CD8-positive, alpha-beta T cell (primary cell): ENCODE measurements at regions of chr17 and their contacts with region 1.

Region 1: DNA sequence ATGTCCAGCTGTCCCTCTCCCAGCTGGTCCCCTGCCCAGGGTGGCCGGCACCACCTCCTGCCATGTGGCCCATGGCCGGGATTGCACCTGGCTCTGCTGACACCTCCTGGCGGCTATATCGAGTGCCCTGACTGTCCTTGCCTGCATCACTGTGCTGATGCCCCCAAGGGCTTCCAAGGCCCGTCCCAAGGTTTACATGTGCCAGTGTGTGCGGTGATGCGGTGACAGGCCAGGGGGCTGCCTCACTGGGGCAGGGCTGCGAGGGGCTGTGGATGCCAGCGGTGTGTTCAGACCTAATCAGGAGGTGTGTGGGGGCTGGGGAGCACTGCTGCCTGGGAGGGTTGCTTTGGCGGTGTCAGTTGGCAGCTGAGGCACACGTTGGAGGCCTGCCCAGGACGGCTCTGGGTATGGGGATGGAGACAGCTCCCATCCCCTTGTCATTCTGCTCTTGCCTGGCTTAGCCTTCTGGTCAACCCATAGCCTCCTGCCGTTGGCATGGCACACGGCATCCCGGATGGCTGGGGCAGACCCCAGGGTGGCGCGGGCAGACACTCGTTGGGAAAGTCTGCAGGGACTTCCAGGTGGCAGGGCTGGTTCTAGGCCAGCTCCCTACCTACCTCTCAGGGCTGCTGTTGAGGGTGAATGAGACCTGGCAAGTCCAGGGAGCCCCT is 5.5 kb downstream of the MAP2K3 start:
- DNase-seq: peak in 1 of 9 experiments; percentile 16
- ATAC-seq: no peak
- H3K4me3 ChIP-seq: no peak overlapping the region
- H3K4me3 Mint-ChIP-seq: no peak overlapping the region
- H3K27ac ChIP-seq: peak overlapping the region in 1 of 2 experiments; percentile 4
- H3K27ac Mint-ChIP-seq: peak overlapping the region; percentile 71
- H3K4me1 ChIP-seq: peaks cover 40% of the 10 kb centered on the region
- H3K4me1 Mint-ChIP-seq: peaks cover 58% of the 10 kb centered on the region
- H3K27me3 ChIP-seq: no peaks in the 10 kb centered on the region
- H3K27me3 Mint-ChIP-seq: no peaks in the 10 kb centered on the region
- CTCF ChIP-seq: no peak

Region 2: GRCh38 chr17:21304091-21304490 is 14.1 kb after region 1 on chr17:
- CTCF ChIA-PET with region 1: no interaction called
- POLR2A ChIA-PET with region 1: no interaction called
- intact Hi-C with region 1: loop called in 1 of 2 experiments (anchors 2 kb)
- DNase-seq: no peak
- ATAC-seq: no peak
- H3K4me3 ChIP-seq: no peak overlapping the region
- H3K4me3 Mint-ChIP-seq: no peak overlapping the region
- H3K27ac ChIP-seq: no peak overlapping the region
- H3K27ac Mint-ChIP-seq: no peak overlapping the region
- H3K4me1 ChIP-seq: no peaks in the 10 kb centered on the region
- H3K4me1 Mint-ChIP-seq: no peaks in the 10 kb centered on the region
- H3K27me3 ChIP-seq: no peaks in the 10 kb centered on the region
- H3K27me3 Mint-ChIP-seq: no peaks in the 10 kb centered on the region
- CTCF ChIP-seq: no peak

Region 3: DNA sequence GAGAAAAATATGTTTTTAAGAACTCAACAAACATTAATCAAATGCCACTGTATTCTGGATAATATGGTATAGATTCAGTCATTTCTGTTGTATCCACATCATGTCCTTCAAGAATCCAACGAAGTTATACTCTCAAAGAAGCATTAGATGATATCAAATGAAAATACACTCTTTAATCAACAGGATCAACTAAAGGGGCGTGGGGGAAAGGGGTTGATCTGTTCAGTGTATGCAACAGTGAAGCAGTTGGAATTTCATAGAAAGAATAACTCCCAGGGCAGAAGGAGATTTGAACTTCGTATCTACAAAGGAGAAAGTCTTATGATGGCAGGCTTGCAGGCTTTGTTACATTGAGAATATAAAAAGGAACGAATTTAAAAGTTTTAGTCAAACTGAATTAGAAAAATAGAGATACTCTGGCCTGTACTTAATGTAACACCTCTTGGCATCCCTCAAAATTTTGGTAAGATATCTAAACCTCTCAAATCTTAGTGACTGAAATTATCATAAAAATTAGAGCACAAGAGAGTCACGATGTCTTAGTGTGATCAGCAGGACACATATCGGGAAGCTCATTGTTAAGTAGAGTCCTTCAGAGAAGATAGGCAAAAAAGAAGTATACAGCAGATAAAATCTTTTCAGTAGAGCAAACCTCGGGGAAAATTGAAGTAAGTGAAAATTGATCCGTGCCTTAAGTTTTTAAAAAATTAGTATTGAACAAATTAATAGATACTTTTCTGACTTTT is 833.7 kb after region 1 on chr17:
- CTCF ChIA-PET with region 1: no interaction called
- POLR2A ChIA-PET with region 1: no interaction called
- intact Hi-C with region 1: no loop called
- DNase-seq: no peak
- ATAC-seq: no peak
- H3K4me3 ChIP-seq: no peak overlapping the region
- H3K4me3 Mint-ChIP-seq: no peak overlapping the region
- H3K27ac ChIP-seq: no peak overlapping the region
- H3K27ac Mint-ChIP-seq: no peak overlapping the region
- H3K4me1 ChIP-seq: no peaks in the 10 kb centered on the region
- H3K4me1 Mint-ChIP-seq: no peaks in the 10 kb centered on the region
- H3K27me3 ChIP-seq: no peaks in the 10 kb centered on the region
- H3K27me3 Mint-ChIP-seq: no peaks in the 10 kb centered on the region
- CTCF ChIP-seq: no peak